ENCODE measurements at regions of chr3 and their contacts with region 1.

Region 1: GRCh38 chr3:48663415-48664312 is 978 bp upstream of the CELSR3 start:
- DNase-seq: peak; percentile 99
- H3K4me3 ChIP-seq: peak overlapping the region; percentile 80
- H3K27ac ChIP-seq: peak overlapping the region; percentile 79
- H3K4me1 ChIP-seq: no peaks in the 10 kb centered on the region
- CTCF ChIP-seq: peak; percentile 90

Region 2: DNA sequence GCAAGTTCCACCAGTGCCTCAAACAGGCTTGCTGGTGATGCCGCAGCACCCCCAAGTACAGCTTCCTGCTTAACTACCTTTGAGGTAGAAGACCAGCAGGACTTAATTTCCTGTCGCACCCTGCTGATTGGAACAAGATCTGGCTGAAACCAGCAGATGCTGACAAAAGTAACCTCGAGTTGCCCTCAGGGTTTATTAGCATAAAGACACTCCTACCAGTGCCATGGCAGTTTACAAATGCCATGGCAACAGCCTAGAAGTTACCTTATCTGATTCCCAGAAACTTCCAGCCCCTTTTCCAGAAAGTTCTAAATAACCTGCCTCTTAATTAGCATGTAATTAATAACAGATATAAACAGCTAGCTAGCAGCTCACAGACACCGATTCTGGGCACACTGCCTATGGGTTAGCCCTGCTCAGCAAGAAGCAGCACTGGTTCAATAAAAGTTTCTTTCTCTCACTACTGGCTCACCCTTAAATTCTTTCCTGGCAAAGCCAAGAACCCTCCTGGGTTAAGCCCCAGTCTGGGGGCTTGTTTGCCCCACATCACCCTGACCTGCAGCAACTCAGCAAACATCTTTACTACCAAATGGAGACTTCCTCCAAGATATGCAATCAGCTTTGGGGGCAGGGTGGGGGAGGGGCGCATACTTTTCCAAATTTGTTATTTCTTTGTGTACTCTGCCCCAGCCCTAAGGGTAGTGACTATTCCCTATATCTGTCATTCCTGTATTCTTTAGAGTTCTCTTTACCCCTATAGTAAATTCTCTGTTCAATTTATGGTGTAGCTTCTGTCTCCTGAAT is 701.6 kb before region 1 on chr3:
- CTCF ChIA-PET with region 1: no interaction called
- POLR2A ChIA-PET with region 1: no interaction called
- intact Hi-C with region 1: no loop called
- DNase-seq: peak; percentile 57
- H3K4me3 ChIP-seq: no peak overlapping the region
- H3K27ac ChIP-seq: no peak overlapping the region
- H3K4me1 ChIP-seq: peaks cover 11% of the 10 kb centered on the region
- CTCF ChIP-seq: no peak

Region 3: DNA sequence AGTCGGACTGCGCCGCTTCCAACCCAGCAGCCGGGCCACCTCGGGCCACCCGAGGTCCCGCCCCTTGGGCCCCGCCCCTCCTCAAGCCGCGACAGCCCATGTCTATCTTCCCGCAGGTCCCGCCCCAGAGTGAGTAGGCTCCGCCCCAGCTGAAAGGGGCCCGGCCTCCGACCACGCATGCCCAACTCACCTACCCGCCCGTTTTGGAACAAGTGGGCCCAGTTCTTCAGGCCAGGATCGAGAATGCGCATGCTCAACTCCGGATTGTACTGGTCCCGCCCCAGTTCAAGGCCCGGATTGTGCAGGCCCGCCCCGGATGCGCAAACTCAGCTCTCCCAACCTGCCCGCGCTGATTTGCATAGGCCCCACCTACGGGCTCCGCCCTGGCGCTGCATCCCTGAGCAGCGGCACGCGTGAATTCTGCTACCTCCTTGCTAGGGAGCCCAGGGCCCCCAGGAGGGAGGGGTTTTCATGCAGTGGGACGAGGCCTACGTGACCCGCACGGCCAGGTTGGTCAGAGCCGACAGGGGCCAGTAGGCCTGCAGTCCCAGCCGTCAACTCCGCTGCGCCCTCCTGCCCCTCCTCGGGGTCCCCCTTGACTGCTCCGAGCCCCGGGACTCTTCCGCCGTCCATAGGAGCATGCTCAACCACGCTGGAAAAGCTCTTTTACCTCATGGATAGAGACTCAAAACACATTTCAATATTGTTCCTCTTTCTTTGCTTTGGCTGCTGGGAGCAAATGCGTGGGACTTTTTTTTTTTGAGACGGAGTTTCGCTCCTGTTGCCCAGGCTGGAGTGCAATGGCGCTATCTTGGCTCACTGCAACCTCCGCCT is 106.7 kb before region 1 on chr3 and contains the start of gene PFKFB4:
- CTCF ChIA-PET with region 1: no interaction called
- POLR2A ChIA-PET with region 1: interaction called, 3 read pairs
- intact Hi-C with region 1: loop called (anchors 5 kb)
- DNase-seq: peak; percentile 99
- H3K4me3 ChIP-seq: peak within 1 kb of the TSS; percentile 77
- H3K27ac ChIP-seq: peak within 1 kb of the TSS; percentile 80
- H3K4me1 ChIP-seq: peaks cover 54% of the 10 kb centered on the region
- CTCF ChIP-seq: no peak
- total RNA-seq, gene PFKFB4: 3.8 and 5.0 TPM in 2 replicates

Region 4: GRCh38 chr3:48609088-48610005 is 54.3 kb before region 1 on chr3 and contains the start of gene UQCRC1:
- CTCF ChIA-PET with region 1: no interaction called
- POLR2A ChIA-PET with region 1: interaction called, 4 read pairs
- intact Hi-C with region 1: loop called (anchors 2 kb)
- DNase-seq: peak; percentile 95
- H3K4me3 ChIP-seq: peak within 1 kb of the TSS; percentile 94
- H3K27ac ChIP-seq: peak within 1 kb of the TSS; percentile 53
- H3K4me1 ChIP-seq: peaks cover 15% of the 10 kb centered on the region
- CTCF ChIP-seq: peak; percentile 71
- total RNA-seq, gene UQCRC1: 125 and 168 TPM in 2 replicates

Region 5: DNA sequence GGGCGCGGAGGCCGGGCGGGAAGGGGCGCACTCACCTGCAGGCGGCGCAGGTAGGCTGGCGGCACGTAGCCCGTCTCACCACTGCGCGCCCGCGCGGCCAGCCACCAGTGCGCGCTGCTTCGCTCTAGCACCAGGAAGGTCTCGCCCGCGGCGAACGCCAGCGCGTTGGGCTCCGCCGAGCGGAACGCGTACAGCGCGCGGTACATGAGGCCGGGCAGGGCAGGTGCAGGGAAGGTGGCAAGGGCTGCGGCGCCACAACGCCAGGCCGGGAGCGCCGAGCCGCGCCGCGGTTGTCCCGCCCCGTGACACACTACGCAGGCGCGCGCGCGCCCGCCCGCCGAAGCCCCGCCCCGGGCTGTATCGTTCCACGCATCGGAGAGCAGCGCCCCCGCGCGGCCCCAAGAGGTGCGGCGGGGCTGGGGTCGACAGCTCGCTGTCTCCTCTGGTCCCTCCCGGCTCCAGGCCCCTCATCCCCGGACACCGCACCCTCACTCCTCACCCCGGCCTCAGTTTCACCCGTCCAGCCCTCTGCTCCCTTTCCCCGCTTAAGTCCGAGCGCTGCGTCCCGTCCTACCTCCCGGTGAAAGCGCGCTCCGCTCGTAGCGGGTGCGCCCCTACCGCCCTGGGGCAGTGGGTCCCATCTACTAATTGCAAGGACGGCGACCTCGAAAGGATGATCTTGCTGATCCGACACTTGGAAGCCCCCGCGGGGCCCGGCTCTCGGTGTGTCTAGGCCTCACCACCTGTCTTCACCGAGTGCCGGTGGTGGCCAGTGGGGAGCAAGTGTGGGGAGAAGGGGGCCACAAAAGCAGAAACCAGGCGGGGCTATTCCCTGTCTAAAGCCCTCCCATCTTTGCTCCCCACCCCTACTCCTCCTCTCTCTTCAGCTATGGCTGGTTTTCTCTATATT is 22.2 kb after region 1 on chr3 and contains the start of gene NCKIPSD:
- CTCF ChIA-PET with region 1: no interaction called
- POLR2A ChIA-PET with region 1: interaction called, 7 read pairs
- intact Hi-C with region 1: loop called (anchors 2 kb)
- DNase-seq: peak; percentile 94
- H3K4me3 ChIP-seq: peak within 1 kb of the TSS; percentile 84
- H3K27ac ChIP-seq: peak within 1 kb of the TSS; percentile 75
- H3K4me1 ChIP-seq: peaks cover 33% of the 10 kb centered on the region
- CTCF ChIP-seq: peak; percentile 81
- total RNA-seq, gene NCKIPSD: 34.8 and 42.1 TPM in 2 replicates

Measured in OCI-LY7 (cell line).